Prostate gland (tissue), 2 donors: ENCODE measurements at regions of chr9 and their contacts with region 1.

Region 1: GRCh38 chr9:130053504-130054324 is at the start of gene GPR107:
- DNase-seq: peak; percentile 61
- H3K4me3 ChIP-seq: peak within 1 kb of the TSS; percentile 93 to 95
- H3K27ac ChIP-seq: peak within 1 kb of the TSS; percentile 90 to 91
- H3K4me1 ChIP-seq: peaks cover 13% of the 10 kb centered on the region
- H3K27me3 ChIP-seq: no peaks in the 10 kb centered on the region
- CTCF ChIP-seq: peak in 1 of 4 experiments; percentile 6
- POLR2A ChIP-seq: peak; percentile 69
- total RNA-seq, gene GPR107: 36.3 to 51.5 TPM

Region 2: DNA sequence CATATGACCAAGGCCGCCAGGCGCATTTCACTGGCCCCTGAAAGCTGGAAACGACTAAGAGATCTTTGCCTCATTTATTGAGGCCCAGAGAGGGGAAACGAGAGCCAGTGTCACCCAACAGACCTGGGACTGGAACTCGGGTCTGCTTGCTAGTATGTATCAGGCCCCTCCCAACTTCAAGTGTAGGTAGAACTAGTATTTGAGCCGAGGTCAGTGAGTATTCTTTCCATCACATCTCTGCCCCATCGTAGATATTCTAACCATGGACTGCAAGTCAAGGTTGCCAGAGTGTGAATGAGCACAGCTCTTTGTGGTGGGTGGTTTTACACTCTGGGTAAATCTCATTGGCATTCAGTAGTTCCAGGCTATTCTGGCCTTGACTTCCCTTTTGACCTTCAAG is 42.2 kb after region 1 on chr9:
- intact Hi-C with region 1: loop called (anchors 5 kb)
- DNase-seq: no peak
- H3K4me3 ChIP-seq: no peak overlapping the region
- H3K27ac ChIP-seq: no peak overlapping the region
- H3K4me1 ChIP-seq: no peaks in the 10 kb centered on the region
- H3K27me3 ChIP-seq: no peaks in the 10 kb centered on the region
- CTCF ChIP-seq: no peak
- POLR2A ChIP-seq: no peak